ENCODE measurements at regions of chr9 and their contacts with region 1.

Region 1: DNA sequence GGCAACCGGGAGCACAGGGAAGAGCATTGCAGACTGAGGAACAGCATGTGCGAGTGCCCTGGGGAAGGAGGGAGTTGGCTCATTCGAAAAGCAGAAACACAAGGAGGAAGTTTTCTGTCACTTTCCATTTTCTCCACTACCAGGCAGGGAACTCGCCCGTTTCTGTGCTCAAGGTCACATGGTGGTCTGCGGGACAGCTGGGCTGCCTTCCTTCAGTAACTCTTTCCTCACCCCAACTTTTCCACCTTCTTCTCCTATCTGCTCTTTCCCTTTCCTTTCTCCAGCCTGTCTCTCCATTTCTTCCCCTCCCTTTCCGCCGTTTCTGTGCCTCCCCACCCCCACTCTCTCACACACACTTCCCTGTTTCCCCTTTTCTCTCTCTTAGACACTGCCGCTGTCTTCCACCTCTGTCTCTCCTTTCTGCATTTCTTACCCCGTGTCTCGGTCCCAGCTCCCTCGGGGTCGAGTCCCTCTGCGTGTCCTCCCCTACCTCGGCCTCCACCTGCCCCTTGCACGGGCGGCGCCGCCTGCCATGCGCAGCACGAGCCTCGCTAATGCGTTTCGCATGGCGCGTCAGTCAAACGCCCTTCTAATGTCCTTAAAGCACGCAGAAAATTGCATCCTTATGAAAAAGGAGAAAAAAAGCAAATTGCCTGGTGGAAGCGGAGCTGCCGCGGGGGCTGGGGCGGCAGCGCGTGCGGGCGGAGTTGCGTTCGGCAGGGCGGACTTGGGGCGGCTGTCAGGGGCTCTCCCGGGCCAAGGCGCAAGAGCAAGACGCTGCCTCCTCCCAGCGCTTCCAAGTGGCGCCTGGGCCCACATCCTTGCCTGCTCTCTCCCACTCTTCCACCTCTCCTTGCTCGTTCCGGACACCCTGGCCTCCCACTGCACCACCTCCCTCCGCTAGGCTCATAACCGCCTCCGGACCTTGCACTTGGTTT is 9.5 kb downstream of the BARX1 start:
- DNase-seq: no peak
- H3K4me3 ChIP-seq: peak overlapping the region; percentile 9 to 60 (median 33); a peak in 7 of 8 replicates
- H3K27ac ChIP-seq: no peak overlapping the region
- H3K4me1 ChIP-seq: peaks cover 4 to 50% (median 17%) of the 10 kb centered on the region in 4 experiments
- H3K27me3 ChIP-seq: peaks cover 77 to 99% (median 95%) of the 10 kb centered on the region in 4 experiments
- CTCF ChIP-seq: no peak
- EP300 ChIP-seq: no peak
- POLR2A ChIP-seq: no peak
- RAD21 ChIP-seq: no peak

Region 2: DNA sequence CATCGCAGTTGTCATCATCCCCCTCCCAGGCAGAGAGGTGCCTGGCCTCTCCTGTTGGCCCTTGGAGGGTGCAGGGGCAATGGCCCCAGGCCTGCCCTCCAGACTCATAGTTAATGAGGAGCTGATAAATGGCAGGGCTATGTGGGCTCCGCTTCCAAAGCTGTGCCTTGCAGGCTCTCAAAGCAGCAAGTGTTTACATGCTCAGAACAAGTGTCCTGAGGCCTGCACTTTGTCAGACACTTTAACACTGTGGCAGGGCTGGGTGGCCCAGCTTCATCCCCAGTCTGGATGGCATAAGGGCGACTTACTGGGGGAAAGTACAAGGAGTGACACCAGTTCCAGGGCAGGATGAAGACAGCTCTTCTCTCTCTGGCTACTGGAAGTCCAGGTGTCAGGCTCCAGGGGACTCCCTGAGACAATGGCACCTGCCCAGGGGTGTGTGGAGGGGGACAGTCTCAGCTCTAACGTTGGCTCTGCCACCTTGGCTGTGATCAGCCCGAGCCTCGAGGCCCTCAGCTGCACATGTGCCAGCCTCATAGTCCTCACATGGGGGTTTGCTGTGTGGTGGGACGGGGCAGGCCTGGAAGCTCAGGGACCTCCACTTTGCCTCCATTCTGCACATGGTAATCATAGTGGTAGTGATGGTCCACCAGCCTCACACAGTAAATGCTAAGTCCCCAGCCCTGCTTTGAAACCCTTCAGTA is 143.9 kb before region 1 on chr9:
- CTCF ChIA-PET with region 1: no interaction called
- POLR2A ChIA-PET with region 1: no interaction called
- DNase-seq: no peak
- H3K4me3 ChIP-seq: no peak overlapping the region
- H3K27ac ChIP-seq: no peak overlapping the region
- H3K4me1 ChIP-seq: no peaks in the 10 kb centered on the region
- H3K27me3 ChIP-seq: no peaks in the 10 kb centered on the region
- CTCF ChIP-seq: no peak
- EP300 ChIP-seq: no peak
- POLR2A ChIP-seq: no peak
- RAD21 ChIP-seq: no peak

Region 3: DNA sequence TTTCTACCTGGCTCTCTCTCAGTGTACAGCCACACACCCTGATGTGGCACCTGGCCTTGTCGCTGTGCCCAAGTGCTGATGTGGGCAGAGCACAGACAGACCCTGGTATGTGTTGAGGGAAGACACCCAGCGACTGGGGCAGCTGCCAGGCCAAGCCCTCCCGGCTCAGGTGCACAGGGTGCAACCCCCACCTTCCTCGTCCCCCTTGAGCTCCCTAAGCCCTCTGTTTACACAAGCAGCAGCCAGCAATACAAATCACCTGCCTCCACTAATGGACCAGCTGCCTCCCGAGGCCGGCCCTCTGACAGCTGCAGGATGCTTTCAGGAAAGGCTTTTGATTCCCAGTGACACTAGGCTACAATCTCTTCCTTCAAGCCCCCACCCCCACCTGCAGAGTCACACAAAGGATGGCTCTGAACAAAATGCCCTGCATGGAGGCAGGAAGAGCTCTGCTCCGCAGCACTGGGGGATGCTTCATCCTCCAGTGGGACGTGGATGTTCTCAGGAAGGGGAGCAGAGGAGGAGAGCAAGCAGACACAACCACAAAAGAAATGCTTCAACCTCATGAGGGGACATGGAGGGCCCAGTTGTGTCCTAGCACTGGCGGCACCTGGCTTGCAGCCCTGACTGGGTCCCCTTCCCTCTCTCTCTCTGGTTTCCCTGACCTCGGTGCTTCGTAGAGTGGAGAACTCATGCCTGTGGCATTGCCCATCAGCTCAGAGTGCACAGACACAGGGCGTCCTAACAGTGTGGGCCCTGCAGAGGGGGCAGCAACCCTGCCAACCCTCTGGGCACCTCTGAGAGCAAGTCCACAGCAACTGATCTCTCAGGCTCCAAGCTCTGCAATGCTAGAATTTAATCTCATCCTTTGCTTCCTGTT is 131.4 kb before region 1 on chr9:
- CTCF ChIA-PET with region 1: interaction called, 15 read pairs
- POLR2A ChIA-PET with region 1: interaction called, 3 read pairs
- DNase-seq: peak in 1 of 2 experiments; percentile 57
- H3K4me3 ChIP-seq: no peak overlapping the region
- H3K27ac ChIP-seq: no peak overlapping the region
- H3K4me1 ChIP-seq: peaks cover 0 to 24% (median 15%) of the 10 kb centered on the region in 4 experiments; a peak in 6 of 7 replicates
- H3K27me3 ChIP-seq: no peaks in the 10 kb centered on the region; a peak in 2 of 7 replicates
- CTCF ChIP-seq: peak; percentile 49 to 66 (median 64)
- EP300 ChIP-seq: no peak
- POLR2A ChIP-seq: no peak
- RAD21 ChIP-seq: peak; percentile 62 to 76

Region 4: GRCh38 chr9:93820667-93821306 is 124.9 kb before region 1 on chr9:
- CTCF ChIA-PET with region 1: interaction called, 15 read pairs
- POLR2A ChIA-PET with region 1: interaction called, 3 read pairs
- DNase-seq: no peak
- H3K4me3 ChIP-seq: no peak overlapping the region
- H3K27ac ChIP-seq: no peak overlapping the region
- H3K4me1 ChIP-seq: no peaks in the 10 kb centered on the region; a peak in 1 of 7 replicates
- H3K27me3 ChIP-seq: peaks cover 0 to 3% (median 0%) of the 10 kb centered on the region in 4 experiments; a peak in 3 of 7 replicates
- CTCF ChIP-seq: peak in 2 of 3 experiments; percentile 66 to 72; a peak in 3 of 4 replicates
- EP300 ChIP-seq: no peak
- POLR2A ChIP-seq: no peak
- RAD21 ChIP-seq: peak; percentile 43 to 59

Region 5: DNA sequence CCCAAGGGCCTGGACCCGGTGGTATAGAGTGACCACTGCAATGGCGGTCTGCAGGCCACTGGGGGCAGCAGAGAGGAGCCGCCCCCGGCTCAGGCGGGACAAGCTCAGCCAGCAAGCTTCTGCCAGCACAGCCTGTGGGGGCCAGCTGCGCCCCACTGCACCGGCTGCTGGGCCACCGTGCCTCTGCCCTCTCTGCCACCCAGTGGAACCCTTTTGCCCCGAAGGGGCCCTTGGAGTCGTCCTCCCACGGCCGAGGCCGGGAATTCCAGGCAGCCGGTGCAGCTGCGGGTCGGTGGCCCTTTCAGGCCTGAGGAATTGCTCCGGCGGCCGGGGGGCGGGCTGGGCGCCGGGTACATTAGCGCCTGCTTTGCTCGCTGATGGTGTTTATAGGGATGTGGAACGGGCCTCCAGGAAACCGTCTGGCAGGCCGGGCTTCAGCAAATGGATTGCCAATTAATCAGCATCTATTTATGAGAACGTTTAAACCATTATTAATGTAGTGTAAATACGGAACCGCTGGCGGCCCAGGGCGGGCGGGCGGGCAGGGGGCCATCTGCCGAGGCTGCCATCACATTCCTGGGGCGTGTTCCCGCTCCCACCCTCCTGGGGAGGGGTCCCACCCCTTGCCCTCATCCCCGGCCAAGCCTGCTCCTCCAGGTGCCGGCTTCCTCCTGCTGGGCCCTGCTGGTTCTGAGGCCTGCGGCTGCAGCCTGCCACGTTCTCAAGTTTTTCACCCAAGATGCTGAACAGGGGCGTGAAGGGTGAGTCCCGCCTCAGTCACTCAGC is 117.9 kb before region 1 on chr9:
- CTCF ChIA-PET with region 1: interaction called, 13 read pairs
- POLR2A ChIA-PET with region 1: no interaction called
- DNase-seq: peak in 1 of 2 experiments; percentile 89
- H3K4me3 ChIP-seq: peak overlapping the region in 3 of 4 experiments; percentile 12 to 55 (median 19); a peak in 4 of 8 replicates
- H3K27ac ChIP-seq: no peak overlapping the region
- H3K4me1 ChIP-seq: peaks cover 4 to 15% (median 11%) of the 10 kb centered on the region in 4 experiments; a peak in 6 of 7 replicates
- H3K27me3 ChIP-seq: peaks cover 0 to 9% (median 5%) of the 10 kb centered on the region in 4 experiments; a peak in 3 of 7 replicates
- CTCF ChIP-seq: peak in 2 of 3 experiments; percentile 86 to 92; a peak in 3 of 4 replicates
- EP300 ChIP-seq: no peak
- POLR2A ChIP-seq: no peak
- RAD21 ChIP-seq: peak; percentile 57 to 70

Region 6: GRCh38 chr9:93860694-93861658 is 84.7 kb before region 1 on chr9:
- CTCF ChIA-PET with region 1: interaction called, 18 read pairs
- POLR2A ChIA-PET with region 1: no interaction called
- DNase-seq: no peak
- H3K4me3 ChIP-seq: no peak overlapping the region
- H3K27ac ChIP-seq: no peak overlapping the region
- H3K4me1 ChIP-seq: peaks cover 2 to 8% (median 4%) of the 10 kb centered on the region in 4 experiments; a peak in 5 of 7 replicates
- H3K27me3 ChIP-seq: no peaks in the 10 kb centered on the region; a peak in 2 of 7 replicates
- CTCF ChIP-seq: peak in 1 of 3 experiments; percentile 20; a peak in 1 of 4 replicates
- EP300 ChIP-seq: no peak
- POLR2A ChIP-seq: no peak
- RAD21 ChIP-seq: no peak; a peak in 1 of 4 replicates

Region 7: GRCh38 chr9:93908591-93909511 is 36.8 kb before region 1 on chr9:
- CTCF ChIA-PET with region 1: interaction called, 12 read pairs
- POLR2A ChIA-PET with region 1: no interaction called
- DNase-seq: no peak
- H3K4me3 ChIP-seq: no peak overlapping the region
- H3K27ac ChIP-seq: no peak overlapping the region
- H3K4me1 ChIP-seq: peaks cover 2 to 9% (median 7%) of the 10 kb centered on the region in 4 experiments; a peak in 6 of 7 replicates
- H3K27me3 ChIP-seq: no peaks in the 10 kb centered on the region
- CTCF ChIP-seq: no peak
- EP300 ChIP-seq: no peak
- POLR2A ChIP-seq: no peak
- RAD21 ChIP-seq: no peak

Region 8: DNA sequence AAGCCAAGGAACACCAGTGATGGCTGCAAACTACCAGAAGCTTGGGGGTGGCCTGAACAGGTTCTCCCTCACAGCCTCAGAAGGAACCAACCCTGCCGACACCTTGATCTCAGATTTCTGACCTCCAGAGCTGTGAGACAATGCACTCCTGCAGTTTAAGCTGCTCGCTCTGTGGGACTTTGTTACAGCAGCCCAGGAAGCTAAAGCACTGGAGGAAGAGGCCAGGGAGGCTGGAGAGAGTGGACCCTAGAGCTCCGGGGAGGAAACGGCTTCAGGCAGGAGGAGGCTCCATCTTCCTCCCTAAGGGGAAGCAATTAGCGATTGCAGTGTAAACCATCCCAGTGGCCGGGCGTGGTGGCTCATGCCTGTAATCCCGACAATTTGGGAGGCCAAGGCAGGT is 15.6 kb before region 1 on chr9:
- CTCF ChIA-PET with region 1: interaction called, 15 read pairs
- POLR2A ChIA-PET with region 1: interaction called, 3 read pairs
- DNase-seq: no peak
- H3K4me3 ChIP-seq: no peak overlapping the region
- H3K27ac ChIP-seq: no peak overlapping the region
- H3K4me1 ChIP-seq: no peaks in the 10 kb centered on the region
- H3K27me3 ChIP-seq: 0 out of 7 replicates have a peak, but pooled peaks cover 0 to 4% (median 0%) of the 10 kb centered on the region in 4 experiments
- CTCF ChIP-seq: no peak
- EP300 ChIP-seq: no peak
- POLR2A ChIP-seq: no peak
- RAD21 ChIP-seq: no peak